Caco-2 (cell line): ENCODE measurements at regions of chr5 and their contacts with region 1.

Region 1: GRCh38 chr5:173917788-173918786 is 29.9 kb downstream of the CPEB4 start:
- DNase-seq: peak; percentile 68 to 74
- H3K4me3 ChIP-seq: peak overlapping the region; percentile 31
- H3K4me3 Mint-ChIP-seq: no peak overlapping the region
- H3K27ac Mint-ChIP-seq: no peak overlapping the region
- H3K4me1 ChIP-seq: peaks cover 12% of the 10 kb centered on the region
- H3K4me1 Mint-ChIP-seq: no peaks in the 10 kb centered on the region
- H3K27me3 ChIP-seq: no peaks in the 10 kb centered on the region
- H3K27me3 Mint-ChIP-seq: no peaks in the 10 kb centered on the region
- CTCF ChIP-seq: no peak

Region 2: GRCh38 chr5:173941758-173942401 is 23.8 kb after region 1 on chr5:
- CTCF ChIA-PET with region 1: no interaction called
- POLR2A ChIA-PET with region 1: no interaction called
- intact Hi-C with region 1: loop called (anchors 1 kb)
- DNase-seq: no peak
- H3K4me3 ChIP-seq: no peak overlapping the region
- H3K4me3 Mint-ChIP-seq: no peak overlapping the region
- H3K27ac Mint-ChIP-seq: peak overlapping the region; percentile 57
- H3K4me1 ChIP-seq: peaks cover 67% of the 10 kb centered on the region
- H3K4me1 Mint-ChIP-seq: peaks cover 49% of the 10 kb centered on the region
- H3K27me3 ChIP-seq: no peaks in the 10 kb centered on the region
- H3K27me3 Mint-ChIP-seq: no peaks in the 10 kb centered on the region
- CTCF ChIP-seq: no peak